Adrenal gland (tissue), 19 donors: ENCODE measurements at regions of chr9 and their contacts with region 1.

Region 1: DNA sequence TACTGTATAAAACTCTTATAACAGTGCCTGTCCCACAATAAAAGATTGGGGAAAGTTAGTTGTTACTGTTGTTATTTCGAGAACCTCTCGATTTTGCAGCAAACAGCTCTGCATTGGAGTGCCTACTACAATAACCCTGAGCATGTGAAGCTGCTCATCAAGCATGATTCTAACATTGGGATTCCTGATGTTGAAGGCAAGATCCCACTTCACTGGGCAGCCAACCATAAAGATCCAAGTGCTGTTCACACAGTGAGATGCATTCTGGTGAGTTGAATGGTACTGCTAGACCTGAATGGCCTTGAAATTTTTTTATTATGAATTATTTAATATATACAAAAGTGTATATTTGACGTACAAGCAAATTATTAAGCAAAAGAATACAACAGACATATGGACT is 123.2 kb downstream of the TEX10 start:
- DNase-seq: no peak
- H3K4me3 ChIP-seq: no peak overlapping the region
- H3K27ac ChIP-seq: no peak overlapping the region
- H3K4me1 ChIP-seq: peaks cover 12 to 20% of the 10 kb centered on the region in 2 donors
- H3K27me3 ChIP-seq: no peaks in the 10 kb centered on the region
- CTCF ChIP-seq: no peak
- POLR2A ChIP-seq: no peak

Region 2: DNA sequence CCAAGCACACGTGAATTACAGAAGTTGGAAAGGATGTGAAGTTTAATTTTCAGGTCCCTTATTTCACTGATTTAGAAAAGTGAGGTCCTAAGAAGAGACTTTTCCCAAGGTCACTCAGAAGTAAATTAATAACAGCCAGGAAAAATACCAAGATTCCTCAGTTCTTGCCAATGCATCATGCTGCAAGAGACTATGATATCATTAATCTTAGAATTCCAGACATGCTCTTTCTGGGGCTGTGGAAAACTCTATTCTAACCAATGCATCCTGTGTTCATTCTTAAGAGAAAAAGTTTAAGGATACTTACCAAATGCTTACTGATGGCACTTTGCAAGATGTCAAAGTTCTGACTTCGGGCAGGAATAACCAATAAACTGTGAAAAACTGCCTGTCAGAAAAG is 80.4 kb after region 1 on chr9:
- intact Hi-C with region 1: loop called in 1 of 2 experiments (anchors 10 kb)
- DNase-seq: no peak
- H3K4me3 ChIP-seq: no peak overlapping the region
- H3K27ac ChIP-seq: no peak overlapping the region
- H3K4me1 ChIP-seq: no peaks in the 10 kb centered on the region
- H3K27me3 ChIP-seq: no peaks in the 10 kb centered on the region
- CTCF ChIP-seq: no peak
- POLR2A ChIP-seq: no peak